Mammary epithelial cell (primary cell): ENCODE measurements at regions of chr10 and their contacts with region 1.

Region 1: GRCh38 chr10:78129211-78129610 is 95.5 kb downstream of the RPS24 start:
- DNase-seq: no peak
- H3K4me3 ChIP-seq: no peak overlapping the region
- H3K27ac ChIP-seq: no peak overlapping the region
- H3K4me1 ChIP-seq: no peaks in the 10 kb centered on the region
- H3K27me3 ChIP-seq: peaks cover 2% of the 10 kb centered on the region
- CTCF ChIP-seq: no peak

Region 2: DNA sequence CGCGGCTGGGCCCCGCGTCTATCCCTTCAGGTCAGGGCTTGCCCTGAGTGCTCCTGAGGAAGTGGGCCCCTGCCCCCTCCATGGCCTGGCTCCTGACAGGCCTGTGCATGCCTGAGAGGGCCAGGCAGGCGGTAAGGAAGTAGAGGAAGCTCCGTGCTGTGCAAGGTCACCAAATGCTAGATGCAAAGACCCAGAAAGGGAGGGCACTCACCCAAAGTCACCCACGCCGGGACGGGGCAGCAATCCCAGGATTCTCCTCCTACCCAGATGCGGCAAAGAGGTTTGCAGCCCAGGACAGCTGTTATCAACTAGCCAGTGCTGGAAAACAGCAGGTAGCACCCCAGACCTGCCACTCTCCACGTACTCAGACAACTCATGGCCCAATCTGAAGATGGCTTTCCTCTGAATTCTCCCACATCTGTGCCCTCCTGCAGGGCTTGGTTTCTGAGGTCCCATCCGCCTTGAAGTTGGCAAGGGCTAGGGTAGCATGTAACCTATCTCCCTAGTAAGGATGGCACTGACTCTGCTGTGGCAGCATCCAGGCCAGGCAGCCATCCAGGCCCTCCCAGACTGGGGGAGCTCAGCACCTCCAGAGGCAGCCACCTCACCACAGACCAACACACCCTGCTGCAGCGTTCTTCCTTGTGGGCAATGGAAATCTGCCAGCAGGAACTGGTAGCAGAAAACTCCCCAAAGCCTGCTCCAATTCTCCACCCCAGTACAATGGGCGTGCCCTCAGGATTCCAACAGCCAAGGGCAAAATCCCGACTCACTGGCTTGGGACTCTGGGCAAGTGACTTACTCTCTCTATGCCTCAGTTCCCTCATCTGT is 230.3 kb before region 1 on chr10:
- CTCF ChIA-PET with region 1: no interaction called
- dilution Hi-C with region 1: no loop called
- in situ Hi-C with region 1: no loop called
- intact Hi-C with region 1: no loop called
- DNase-seq: peak; percentile 98
- H3K4me3 ChIP-seq: peak overlapping the region in 2 of 3 experiments; percentile 12 to 18
- H3K27ac ChIP-seq: peak overlapping the region; percentile 83
- H3K4me1 ChIP-seq: peaks cover 33% of the 10 kb centered on the region
- H3K27me3 ChIP-seq: no peaks in the 10 kb centered on the region
- CTCF ChIP-seq: no peak

Region 3: GRCh38 chr10:78170026-78170475 is 40.8 kb after region 1 on chr10:
- CTCF ChIA-PET with region 1: no interaction called
- dilution Hi-C with region 1: no loop called
- in situ Hi-C with region 1: no loop called
- intact Hi-C with region 1: no loop called
- DNase-seq: peak; percentile 52
- H3K4me3 ChIP-seq: no peak overlapping the region
- H3K27ac ChIP-seq: no peak overlapping the region
- H3K4me1 ChIP-seq: no peaks in the 10 kb centered on the region
- H3K27me3 ChIP-seq: no peaks in the 10 kb centered on the region
- CTCF ChIP-seq: no peak

Region 4: DNA sequence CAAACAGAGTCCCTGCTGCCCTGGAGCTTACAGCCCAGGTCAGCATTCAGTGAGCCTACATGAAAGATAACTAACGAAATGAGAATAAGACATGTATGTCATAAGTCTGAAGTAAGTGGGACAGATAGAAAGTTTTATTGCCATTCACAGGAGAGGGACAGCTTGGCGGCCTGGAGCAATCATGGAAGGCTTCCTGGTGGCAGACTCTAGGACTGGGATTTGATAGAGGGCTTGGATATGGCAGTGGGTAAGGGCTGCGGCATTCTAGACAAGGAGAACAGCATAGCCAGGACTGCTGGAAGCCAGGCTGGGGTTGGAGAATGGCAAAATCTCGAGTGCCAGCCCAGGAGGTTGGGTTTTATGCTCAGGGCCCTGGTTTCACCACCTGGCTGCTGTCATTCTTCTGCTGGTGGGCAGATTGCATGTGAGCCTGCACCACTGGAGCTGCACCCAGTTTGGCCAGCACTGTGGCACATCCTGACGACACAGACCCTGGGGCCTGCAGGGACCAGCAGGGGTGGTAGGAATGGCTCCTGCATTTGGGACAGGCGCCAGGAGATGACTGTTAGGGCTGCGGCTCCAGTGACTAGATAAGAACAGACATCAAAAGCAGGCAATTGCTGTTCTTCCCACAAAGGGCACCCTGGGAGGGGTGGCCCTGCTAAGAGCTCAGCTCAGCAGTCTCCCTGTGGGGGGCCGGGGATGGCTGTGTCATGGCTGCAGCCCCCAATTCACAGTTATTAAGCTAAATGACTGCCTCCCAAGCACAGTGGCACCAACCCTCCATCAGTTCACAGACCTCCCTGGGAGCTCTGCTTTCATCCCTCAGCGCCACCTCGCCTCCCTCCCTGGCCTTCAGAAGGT is 65.6 kb after region 1 on chr10:
- CTCF ChIA-PET with region 1: no interaction called
- dilution Hi-C with region 1: loop called (anchors 5 kb)
- in situ Hi-C with region 1: no loop called
- intact Hi-C with region 1: no loop called
- DNase-seq: peak; percentile 12
- H3K4me3 ChIP-seq: no peak overlapping the region
- H3K27ac ChIP-seq: no peak overlapping the region
- H3K4me1 ChIP-seq: peaks cover 22% of the 10 kb centered on the region
- H3K27me3 ChIP-seq: no peaks in the 10 kb centered on the region
- CTCF ChIP-seq: no peak